IMR-90 (cell line): ENCODE measurements at regions of chr14 and their contacts with region 1.

Region 1: GRCh38 chr14:92832137-92832700 is 38.1 kb downstream of the GOLGA5 start:
- DNase-seq: no peak
- ATAC-seq: no peak
- H3K4me3 ChIP-seq: no peak overlapping the region
- H3K27ac ChIP-seq: no peak overlapping the region
- H3K4me1 ChIP-seq: no peaks in the 10 kb centered on the region
- H3K27me3 ChIP-seq: no peaks in the 10 kb centered on the region
- CTCF ChIP-seq: no peak
- POLR2A ChIP-seq: no peak
- RAD21 ChIP-seq: no peak

Region 2: DNA sequence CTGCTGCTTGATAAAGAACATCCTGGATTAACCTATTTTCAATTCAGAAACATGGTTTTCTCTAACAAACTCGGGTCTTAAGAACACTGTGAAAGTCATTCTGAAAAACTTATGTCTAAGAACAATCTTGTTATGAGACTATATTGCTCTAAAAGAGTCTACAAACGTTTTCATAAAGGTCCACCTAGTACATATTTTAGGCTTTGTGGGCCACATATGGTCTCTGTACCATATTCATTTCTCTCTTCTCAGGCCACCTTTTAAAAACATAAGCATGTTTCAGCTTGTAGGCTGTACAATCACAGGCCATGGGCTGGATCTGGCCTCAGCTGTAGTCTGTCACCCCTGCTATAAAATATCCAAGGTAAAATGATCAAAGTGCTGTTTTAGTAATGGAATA is 1362.0 kb before region 1 on chr14:
- CTCF ChIA-PET with region 1: no interaction called
- POLR2A ChIA-PET with region 1: no interaction called
- dilution Hi-C with region 1: no loop called
- in situ Hi-C with region 1: no loop called
- intact Hi-C with region 1: loop called (anchors 10 kb)
- DNase-seq: no peak
- ATAC-seq: no peak
- H3K4me3 ChIP-seq: no peak overlapping the region
- H3K27ac ChIP-seq: no peak overlapping the region
- H3K4me1 ChIP-seq: no peaks in the 10 kb centered on the region
- H3K27me3 ChIP-seq: no peaks in the 10 kb centered on the region
- CTCF ChIP-seq: no peak
- POLR2A ChIP-seq: no peak
- RAD21 ChIP-seq: no peak

Region 3: GRCh38 chr14:92026548-92027190 is 805.5 kb before region 1 on chr14:
- CTCF ChIA-PET with region 1: no interaction called
- POLR2A ChIA-PET with region 1: no interaction called
- dilution Hi-C with region 1: no loop called
- in situ Hi-C with region 1: no loop called
- intact Hi-C with region 1: no loop called
- DNase-seq: no peak
- ATAC-seq: no peak
- H3K4me3 ChIP-seq: no peak overlapping the region
- H3K27ac ChIP-seq: no peak overlapping the region
- H3K4me1 ChIP-seq: peaks cover 6% of the 10 kb centered on the region
- H3K27me3 ChIP-seq: no peaks in the 10 kb centered on the region
- CTCF ChIP-seq: no peak
- POLR2A ChIP-seq: no peak
- RAD21 ChIP-seq: no peak

Region 4: DNA sequence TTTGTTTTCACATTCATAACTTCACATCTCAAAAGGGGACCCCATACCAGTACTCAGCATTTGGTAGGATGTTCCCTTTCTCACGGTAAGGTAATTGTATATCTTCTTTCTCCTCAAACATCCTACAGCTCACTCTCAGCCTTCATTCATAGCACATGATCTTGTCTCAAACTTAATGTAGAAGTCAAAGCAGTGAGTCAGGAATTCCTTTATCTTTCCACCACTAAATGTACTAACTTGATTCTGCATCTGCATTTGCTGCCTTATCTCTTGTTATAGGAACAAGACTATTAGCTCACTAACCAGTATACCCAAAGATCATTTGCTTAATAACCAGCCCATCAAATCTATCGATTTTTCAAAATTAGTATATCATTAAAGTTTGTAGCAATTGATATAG is 687.5 kb before region 1 on chr14:
- CTCF ChIA-PET with region 1: no interaction called
- POLR2A ChIA-PET with region 1: no interaction called
- dilution Hi-C with region 1: no loop called
- in situ Hi-C with region 1: no loop called
- intact Hi-C with region 1: loop called (anchors 10 kb)
- DNase-seq: peak; percentile 74
- ATAC-seq: peak; percentile 77
- H3K4me3 ChIP-seq: no peak overlapping the region
- H3K27ac ChIP-seq: no peak overlapping the region
- H3K4me1 ChIP-seq: no peaks in the 10 kb centered on the region
- H3K27me3 ChIP-seq: no peaks in the 10 kb centered on the region
- CTCF ChIP-seq: no peak
- POLR2A ChIP-seq: no peak
- RAD21 ChIP-seq: no peak

Region 5: GRCh38 chr14:92740440-92740839 is 91.8 kb before region 1 on chr14:
- CTCF ChIA-PET with region 1: no interaction called
- POLR2A ChIA-PET with region 1: no interaction called
- dilution Hi-C with region 1: no loop called
- in situ Hi-C with region 1: no loop called
- intact Hi-C with region 1: no loop called
- DNase-seq: no peak
- ATAC-seq: no peak
- H3K4me3 ChIP-seq: no peak overlapping the region
- H3K27ac ChIP-seq: no peak overlapping the region
- H3K4me1 ChIP-seq: no peaks in the 10 kb centered on the region
- H3K27me3 ChIP-seq: peaks cover 12% of the 10 kb centered on the region
- CTCF ChIP-seq: no peak
- POLR2A ChIP-seq: no peak
- RAD21 ChIP-seq: no peak

Region 6: GRCh38 chr14:92813201-92813600 is 19.0 kb before region 1 on chr14:
- CTCF ChIA-PET with region 1: no interaction called
- POLR2A ChIA-PET with region 1: no interaction called
- dilution Hi-C with region 1: no loop called
- in situ Hi-C with region 1: no loop called
- intact Hi-C with region 1: loop called (anchors 2 kb)
- DNase-seq: no peak
- ATAC-seq: no peak
- H3K4me3 ChIP-seq: no peak overlapping the region
- H3K27ac ChIP-seq: no peak overlapping the region
- H3K4me1 ChIP-seq: no peaks in the 10 kb centered on the region
- H3K27me3 ChIP-seq: no peaks in the 10 kb centered on the region
- CTCF ChIP-seq: no peak
- POLR2A ChIP-seq: no peak
- RAD21 ChIP-seq: no peak

Region 7: GRCh38 chr14:92850492-92850891 is 18.3 kb after region 1 on chr14:
- CTCF ChIA-PET with region 1: no interaction called
- POLR2A ChIA-PET with region 1: interaction called, 10 read pairs
- dilution Hi-C with region 1: no loop called
- in situ Hi-C with region 1: no loop called
- intact Hi-C with region 1: no loop called
- DNase-seq: peak; percentile 46
- ATAC-seq: peak; percentile 32; the same call in 1 of the 2 replicates
- H3K4me3 ChIP-seq: no peak overlapping the region
- H3K27ac ChIP-seq: no peak overlapping the region
- H3K4me1 ChIP-seq: peaks cover 2% of the 10 kb centered on the region; the same call in 1 of the 2 replicates
- H3K27me3 ChIP-seq: 0 out of 2 replicates have a peak, but pooled peaks cover 2% of the 10 kb centered on the region
- CTCF ChIP-seq: no peak
- POLR2A ChIP-seq: no peak
- RAD21 ChIP-seq: no peak

Region 8: GRCh38 chr14:93132470-93133065 is 300.3 kb after region 1 on chr14:
- CTCF ChIA-PET with region 1: no interaction called
- POLR2A ChIA-PET with region 1: no interaction called
- dilution Hi-C with region 1: no loop called
- in situ Hi-C with region 1: no loop called
- intact Hi-C with region 1: loop called (anchors 10 kb)
- DNase-seq: peak; percentile 22
- ATAC-seq: peak; percentile 56; the same call in 1 of the 2 replicates
- H3K4me3 ChIP-seq: no peak overlapping the region
- H3K27ac ChIP-seq: no peak overlapping the region
- H3K4me1 ChIP-seq: no peaks in the 10 kb centered on the region
- H3K27me3 ChIP-seq: peaks cover 12% of the 10 kb centered on the region
- CTCF ChIP-seq: peak; percentile 38
- POLR2A ChIP-seq: no peak
- RAD21 ChIP-seq: peak; percentile 36; the same call in 1 of the 2 replicates